ENCODE measurements at regions of chr9 and their contacts with region 1.

Region 1: GRCh38 chr9:101533334-101534107 is at the start of gene RNF20:
- DNase-seq: peak; percentile 99
- ATAC-seq: peak; percentile 99
- H3K4me3 ChIP-seq: peak within 1 kb of the TSS; percentile 83 to 94 (median 88)
- H3K27ac ChIP-seq: peak within 1 kb of the TSS; percentile 89 to 96 (median 95)
- H3K4me1 ChIP-seq: peaks cover 27 to 28% of the 10 kb centered on the region in 2 donors
- H3K27me3 ChIP-seq: no peaks in the 10 kb centered on the region
- CTCF ChIP-seq: no peak
- POLR2A ChIP-seq: peak in 1 of 2 donors; percentile 27
- total RNA-seq, gene RNF20: 26.6 to 34.4 (median 29.7) TPM

Region 2: GRCh38 chr9:101398068-101398929 is 135.2 kb before region 1 on chr9 and contains the starts of genes MRPL50 and ZNF189:
- in situ Hi-C with region 1: loop called in 2 of 4 experiments (anchors 5 kb)
- intact Hi-C with region 1: loop called (anchors 1 kb)
- DNase-seq: peak; percentile 99
- ATAC-seq: peak; percentile 97 to 98
- H3K4me3 ChIP-seq: peak within 1 kb of the TSS; percentile 71 to 85 (median 78)
- H3K27ac ChIP-seq: peak within 1 kb of the TSS; percentile 86 to 97 (median 90)
- H3K4me1 ChIP-seq: peaks cover 37 to 49% of the 10 kb centered on the region in 2 donors
- H3K27me3 ChIP-seq: no peaks in the 10 kb centered on the region
- CTCF ChIP-seq: no peak
- POLR2A ChIP-seq: peak; percentile 66 to 79
- total RNA-seq, gene MRPL50: 6.3 to 13.7 (median 10.2) TPM
- total RNA-seq, gene ZNF189: 9.7 to 42.8 (median 12.2) TPM

Region 3: GRCh38 chr9:101449140-101449721 is 84.3 kb before region 1 on chr9:
- in situ Hi-C with region 1: no loop called
- intact Hi-C with region 1: loop called (anchors 1 kb)
- DNase-seq: peak; percentile 29 to 63
- ATAC-seq: peak; percentile 91 to 97
- H3K4me3 ChIP-seq: peak overlapping the region; percentile 58 to 79 (median 74)
- H3K27ac ChIP-seq: peak overlapping the region; percentile 37 to 80 (median 74)
- H3K4me1 ChIP-seq: no peaks in the 10 kb centered on the region
- H3K27me3 ChIP-seq: no peaks in the 10 kb centered on the region
- CTCF ChIP-seq: peak; percentile 42 to 76 (median 56)
- POLR2A ChIP-seq: no peak

Region 4: GRCh38 chr9:101458955-101459631 is 74.4 kb before region 1 on chr9:
- in situ Hi-C with region 1: loop called in 3 of 4 experiments (anchors 5 kb)
- intact Hi-C with region 1: loop called (anchors 1 kb)
- DNase-seq: no peak
- ATAC-seq: peak; percentile 83 to 85
- H3K4me3 ChIP-seq: no peak overlapping the region
- H3K27ac ChIP-seq: no peak overlapping the region
- H3K4me1 ChIP-seq: no peaks in the 10 kb centered on the region
- H3K27me3 ChIP-seq: peaks cover 0 to 5% (median 0%) of the 10 kb centered on the region in 3 donors
- CTCF ChIP-seq: peak; percentile 14 to 75 (median 52)
- POLR2A ChIP-seq: no peak

Region 5: DNA sequence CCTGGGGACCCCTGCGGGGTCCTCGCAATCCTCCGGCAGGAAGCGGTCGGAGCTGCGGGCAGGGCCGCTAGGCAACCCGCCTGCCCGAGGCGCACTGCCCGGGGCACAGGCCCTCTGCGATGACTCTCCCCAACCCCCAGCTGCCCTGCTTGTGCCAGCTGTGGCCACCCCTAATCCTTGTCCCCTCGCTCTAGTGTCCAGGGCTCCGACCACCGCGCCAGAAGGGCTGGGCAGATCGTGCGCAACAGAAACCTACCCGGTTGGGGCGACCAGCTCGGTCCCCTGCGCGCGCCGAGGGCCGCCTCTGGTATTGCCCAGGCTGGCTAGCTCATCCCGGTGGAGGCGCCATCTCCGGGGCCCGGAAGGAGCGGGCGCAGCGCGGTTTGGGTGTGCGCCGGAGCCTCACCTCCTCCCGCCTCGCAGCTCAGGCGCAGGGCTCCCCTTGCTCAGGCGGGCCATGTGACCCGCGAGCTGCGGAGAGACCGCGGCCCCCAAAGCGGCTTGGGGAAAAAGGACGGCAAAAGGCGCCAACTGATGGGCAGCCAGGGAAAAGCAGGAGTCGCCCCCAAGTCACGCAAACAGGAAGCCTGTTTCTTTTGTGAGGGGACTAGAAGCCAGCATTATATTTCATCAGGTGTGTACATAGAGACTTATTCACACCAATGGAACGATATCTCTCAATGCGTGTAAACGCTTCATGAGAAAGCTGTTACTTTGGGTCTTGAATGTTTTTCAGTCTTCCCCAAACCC is 46.7 kb before region 1 on chr9:
- in situ Hi-C with region 1: no loop called
- intact Hi-C with region 1: loop called (anchors 2 kb)
- DNase-seq: no peak
- ATAC-seq: peak; percentile 63 to 68
- H3K4me3 ChIP-seq: peak overlapping the region; percentile 67 to 81 (median 74)
- H3K27ac ChIP-seq: peak overlapping the region; percentile 65 to 77 (median 75)
- H3K4me1 ChIP-seq: peaks cover 6 to 11% of the 10 kb centered on the region in 2 donors
- H3K27me3 ChIP-seq: no peaks in the 10 kb centered on the region
- CTCF ChIP-seq: no peak
- POLR2A ChIP-seq: no peak

Region 6: GRCh38 chr9:101674165-101674564 is 140.6 kb after region 1 on chr9:
- in situ Hi-C with region 1: no loop called
- intact Hi-C with region 1: no loop called
- DNase-seq: no peak
- ATAC-seq: no peak
- H3K4me3 ChIP-seq: no peak overlapping the region
- H3K27ac ChIP-seq: no peak overlapping the region
- H3K4me1 ChIP-seq: no peaks in the 10 kb centered on the region
- H3K27me3 ChIP-seq: no peaks in the 10 kb centered on the region
- CTCF ChIP-seq: no peak
- POLR2A ChIP-seq: no peak